Activated CD4-positive, alpha-beta T cell treated with anti-CD3 and anti-CD28 coated beads for 36 hours (primary cell): ENCODE measurements at regions of chr17 and their contacts with region 1.

Region 1: DNA sequence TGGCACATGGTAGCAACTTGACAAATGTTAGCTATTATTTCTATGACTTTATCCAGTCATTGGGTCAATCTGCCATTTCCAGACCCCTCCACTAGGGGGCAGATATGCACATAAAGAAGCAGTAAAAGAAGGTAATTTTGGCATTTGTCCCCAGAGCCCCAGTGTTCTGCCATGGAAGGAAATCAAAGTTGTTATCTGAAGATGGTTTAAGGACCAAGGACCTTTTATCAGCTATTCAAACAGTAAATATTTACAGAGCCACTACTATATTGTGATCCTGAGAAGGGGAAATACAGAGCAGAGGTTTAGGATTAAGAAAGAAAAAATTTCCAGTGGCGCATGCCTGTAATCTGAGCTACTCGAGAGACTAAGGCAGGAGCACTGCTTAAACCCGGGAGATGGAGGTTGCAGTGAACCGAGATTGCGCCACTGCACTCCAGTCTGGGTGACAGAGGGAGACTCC is 20.0 kb downstream of the TRAF4 start:
- DNase-seq: peak; percentile 87
- ATAC-seq: peak; percentile 63
- H3K4me3 Mint-ChIP-seq: no peak overlapping the region
- H3K27ac Mint-ChIP-seq: peak overlapping the region; percentile 80
- H3K4me1 Mint-ChIP-seq: peaks cover 25% of the 10 kb centered on the region
- H3K27me3 Mint-ChIP-seq: no peaks in the 10 kb centered on the region

Region 2: GRCh38 chr17:28518132-28518531 is 245.7 kb before region 1 on chr17:
- CTCF ChIA-PET with region 1: no interaction called
- POLR2A ChIA-PET with region 1: no interaction called
- intact Hi-C with region 1: no loop called
- DNase-seq: no peak
- ATAC-seq: no peak
- H3K4me3 Mint-ChIP-seq: no peak overlapping the region
- H3K27ac Mint-ChIP-seq: no peak overlapping the region
- H3K4me1 Mint-ChIP-seq: no peaks in the 10 kb centered on the region
- H3K27me3 Mint-ChIP-seq: peaks cover 6% of the 10 kb centered on the region

Region 3: GRCh38 chr17:28734813-28735722 is 28.8 kb before region 1 on chr17:
- CTCF ChIA-PET with region 1: interaction called, 10 read pairs
- POLR2A ChIA-PET with region 1: interaction called, 4 read pairs
- intact Hi-C with region 1: no loop called
- DNase-seq: no peak
- ATAC-seq: no peak
- H3K4me3 Mint-ChIP-seq: no peak overlapping the region
- H3K27ac Mint-ChIP-seq: no peak overlapping the region
- H3K4me1 Mint-ChIP-seq: peaks cover 21% of the 10 kb centered on the region
- H3K27me3 Mint-ChIP-seq: no peaks in the 10 kb centered on the region

Region 4: GRCh38 chr17:28796062-28796461 is 32.2 kb after region 1 on chr17:
- CTCF ChIA-PET with region 1: interaction called, 10 read pairs
- POLR2A ChIA-PET with region 1: no interaction called
- intact Hi-C with region 1: no loop called
- DNase-seq: no peak
- ATAC-seq: no peak
- H3K4me3 Mint-ChIP-seq: no peak overlapping the region
- H3K27ac Mint-ChIP-seq: no peak overlapping the region
- H3K4me1 Mint-ChIP-seq: peaks cover 10% of the 10 kb centered on the region
- H3K27me3 Mint-ChIP-seq: no peaks in the 10 kb centered on the region

Region 5: DNA sequence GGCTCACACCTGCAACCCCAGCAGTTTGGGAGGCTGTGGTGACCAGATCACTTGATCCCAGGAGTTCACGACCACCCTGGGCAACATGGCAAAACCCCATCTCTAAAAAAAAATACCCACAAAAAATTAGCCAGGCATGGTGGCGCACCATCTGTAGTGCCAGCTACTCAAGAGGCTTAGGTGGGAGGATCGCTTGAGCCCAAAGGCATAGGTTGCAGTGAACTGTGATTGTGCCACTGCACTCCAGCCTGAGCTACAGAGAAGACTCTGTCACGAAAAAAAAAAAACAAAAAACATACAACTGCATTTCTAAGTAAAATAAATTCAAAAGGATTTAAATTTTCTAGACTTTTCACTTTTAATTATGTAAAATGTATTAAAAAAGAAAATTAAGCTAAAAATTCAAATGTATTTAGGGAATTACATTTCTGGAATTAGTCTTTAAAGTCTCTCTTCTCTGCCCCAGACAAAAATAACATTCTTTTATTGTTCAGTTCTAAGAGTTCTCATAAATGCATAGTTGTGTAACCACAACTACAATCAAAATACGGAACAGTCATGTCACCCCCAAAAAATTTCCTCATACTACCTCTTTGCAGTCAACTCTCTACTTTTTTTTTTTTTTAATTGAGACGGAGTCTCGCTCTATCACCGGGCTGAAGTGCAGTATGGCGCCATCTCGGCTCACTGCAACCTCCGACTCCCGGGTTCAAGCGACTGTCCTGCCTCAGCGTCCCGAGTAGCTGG is 64.6 kb after region 1 on chr17:
- CTCF ChIA-PET with region 1: interaction called, 15 read pairs
- POLR2A ChIA-PET with region 1: no interaction called
- intact Hi-C with region 1: no loop called
- DNase-seq: no peak
- ATAC-seq: no peak
- H3K4me3 Mint-ChIP-seq: no peak overlapping the region
- H3K27ac Mint-ChIP-seq: no peak overlapping the region
- H3K4me1 Mint-ChIP-seq: peaks cover 6% of the 10 kb centered on the region
- H3K27me3 Mint-ChIP-seq: no peaks in the 10 kb centered on the region

Region 6: GRCh38 chr17:28902819-28903545 is 139.1 kb after region 1 on chr17 and contains the start of gene DHRS13:
- CTCF ChIA-PET with region 1: interaction called, 19 read pairs
- POLR2A ChIA-PET with region 1: interaction called, 4 read pairs
- intact Hi-C with region 1: loop called in 1 of 2 experiments (anchors 1 kb)
- DNase-seq: peak; percentile 97
- ATAC-seq: peak; percentile 89
- H3K4me3 Mint-ChIP-seq: peak within 1 kb of the TSS; percentile 87
- H3K27ac Mint-ChIP-seq: peak within 1 kb of the TSS; percentile 92
- H3K4me1 Mint-ChIP-seq: peaks cover 34% of the 10 kb centered on the region
- H3K27me3 Mint-ChIP-seq: no peaks in the 10 kb centered on the region
- total RNA-seq, gene DHRS13: 23.3 to 29.5 TPM

Region 7: GRCh38 chr17:28925912-28926365 is 162.1 kb after region 1 on chr17:
- CTCF ChIA-PET with region 1: interaction called, 15 read pairs
- POLR2A ChIA-PET with region 1: no interaction called
- intact Hi-C with region 1: no loop called
- DNase-seq: peak; percentile 51
- ATAC-seq: peak; percentile 84
- H3K4me3 Mint-ChIP-seq: peak overlapping the region; percentile 36
- H3K27ac Mint-ChIP-seq: peak overlapping the region; percentile 88
- H3K4me1 Mint-ChIP-seq: peaks cover 59% of the 10 kb centered on the region
- H3K27me3 Mint-ChIP-seq: no peaks in the 10 kb centered on the region